ENCODE measurements at regions of chr4 and their contacts with region 1.

Region 1: DNA sequence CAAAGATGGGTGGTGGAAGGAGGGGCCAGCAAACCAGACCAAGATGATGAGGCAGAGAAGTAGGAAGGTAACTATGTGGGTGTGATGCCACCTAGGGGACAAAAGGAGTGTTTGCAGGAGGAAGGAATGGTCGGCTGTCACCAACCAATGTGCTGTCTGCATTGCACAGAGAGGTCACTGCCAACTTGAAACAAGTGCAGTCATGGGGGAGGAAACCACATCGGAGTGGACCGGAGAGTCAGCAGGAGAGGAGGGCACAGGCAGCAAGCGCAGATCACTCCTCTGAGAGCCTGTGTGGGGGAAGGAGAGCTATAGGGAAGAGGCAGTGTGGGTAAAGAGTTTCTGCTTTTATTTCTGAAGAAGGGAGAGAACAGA is 38.5 kb upstream of the FGFBP2 start:
- DNase-seq: peak in 9 of 10 donors; percentile 44 to 74 (median 64)
- H3K4me3 ChIP-seq: peak overlapping the region in 4 of 59 donors; percentile 8 to 43 (median 13)
- H3K27ac ChIP-seq: no peak overlapping the region
- H3K27me3 ChIP-seq: no peaks in the 10 kb centered on the region
- CTCF ChIP-seq: peak; percentile 57 to 94 (median 84)

Region 2: GRCh38 chr4:15729910-15730533 is 271.4 kb before region 1 on chr4:
- intact Hi-C with region 1: loop called in 1 of 2 experiments (anchors 5 kb)
- DNase-seq: peak in 1 of 10 donors; percentile 6
- H3K4me3 ChIP-seq: no peak overlapping the region
- H3K27ac ChIP-seq: no peak overlapping the region
- H3K27me3 ChIP-seq: no peaks in the 10 kb centered on the region
- CTCF ChIP-seq: peak; percentile 78 to 99 (median 90)

Region 3: DNA sequence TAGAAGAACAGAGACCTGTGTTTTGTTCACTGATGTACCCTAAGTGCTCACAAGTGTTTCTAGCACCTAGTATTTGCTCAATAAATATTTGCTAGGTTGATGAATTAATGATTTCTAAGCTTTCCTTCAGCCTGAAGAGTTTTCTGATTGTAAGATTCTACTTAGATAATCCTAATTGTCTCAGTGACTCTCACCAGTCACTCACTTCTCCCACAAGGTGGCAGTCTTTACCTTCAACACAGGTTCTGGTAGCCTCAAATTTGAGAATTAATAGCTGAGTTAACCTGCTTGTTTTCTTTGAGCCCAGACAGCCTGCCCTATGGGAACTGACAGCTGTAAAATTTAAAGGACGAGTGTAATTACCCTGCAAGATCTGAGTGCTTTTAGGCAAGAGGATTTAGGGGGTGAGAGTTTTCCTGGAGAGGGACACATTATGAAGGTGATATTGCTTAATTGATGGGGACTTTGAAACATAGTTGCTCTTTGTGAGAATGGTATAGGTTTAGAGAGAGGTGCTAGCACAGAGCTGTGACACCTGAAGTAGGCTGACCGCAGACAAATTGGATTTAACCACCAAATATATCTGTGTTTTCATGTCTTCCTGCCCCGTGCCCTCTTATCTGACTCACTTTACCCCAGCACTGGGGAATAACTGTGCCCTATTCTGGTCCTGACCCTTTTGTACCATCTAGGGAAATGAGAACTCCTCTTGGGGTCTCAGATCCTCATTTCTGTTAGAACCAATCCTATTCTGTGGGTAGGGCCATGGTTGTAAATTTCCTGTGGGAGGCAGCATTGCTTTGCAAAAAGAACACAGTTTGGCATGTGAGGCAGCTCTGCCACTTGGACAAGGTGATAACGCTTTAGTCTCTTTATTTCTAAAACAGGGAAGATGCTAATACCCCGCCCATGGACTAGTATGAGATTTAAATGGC is 195.6 kb before region 1 on chr4:
- intact Hi-C with region 1: loop called (anchors 5 kb)
- DNase-seq: peak in 2 of 10 donors; percentile 7 to 29
- H3K4me3 ChIP-seq: no peak overlapping the region
- H3K27ac ChIP-seq: no peak overlapping the region
- H3K27me3 ChIP-seq: no peaks in the 10 kb centered on the region
- CTCF ChIP-seq: peak; percentile 35 to 78 (median 66)

Region 4: GRCh38 chr4:15882675-15883086 is 118.8 kb before region 1 on chr4:
- intact Hi-C with region 1: loop called (anchors 2 kb)
- DNase-seq: peak in 4 of 10 donors; percentile 20 to 58 (median 22)
- H3K4me3 ChIP-seq: no peak overlapping the region
- H3K27ac ChIP-seq: no peak overlapping the region
- H3K27me3 ChIP-seq: peaks cover 0 to 4% (median 0%) of the 10 kb centered on the region in 45 donors
- CTCF ChIP-seq: peak; percentile 67 to 94 (median 87)